Kidney (tissue), 22 donors: ENCODE measurements at regions of chrX and their contacts with region 1.

Region 1: GRCh38 chrX:18390941-18391538 is 34.4 kb upstream of the CDKL5 start:
- DNase-seq: peak in 4 of 5 donors; percentile 41 to 67 (median 48)
- H3K4me3 ChIP-seq: no peak overlapping the region
- H3K27ac ChIP-seq: no peak overlapping the region
- H3K4me1 ChIP-seq: no peaks in the 10 kb centered on the region
- H3K27me3 ChIP-seq: no peaks in the 10 kb centered on the region
- CTCF ChIP-seq: peak; percentile 58

Region 2: GRCh38 chrX:18769812-18770573 is 379.0 kb after region 1 on chrX:
- intact Hi-C with region 1: no loop called
- DNase-seq: peak in 2 of 5 donors; percentile 66 to 78
- H3K4me3 ChIP-seq: no peak overlapping the region
- H3K27ac ChIP-seq: no peak overlapping the region
- H3K4me1 ChIP-seq: no peaks in the 10 kb centered on the region
- H3K27me3 ChIP-seq: no peaks in the 10 kb centered on the region
- CTCF ChIP-seq: no peak

Region 3: DNA sequence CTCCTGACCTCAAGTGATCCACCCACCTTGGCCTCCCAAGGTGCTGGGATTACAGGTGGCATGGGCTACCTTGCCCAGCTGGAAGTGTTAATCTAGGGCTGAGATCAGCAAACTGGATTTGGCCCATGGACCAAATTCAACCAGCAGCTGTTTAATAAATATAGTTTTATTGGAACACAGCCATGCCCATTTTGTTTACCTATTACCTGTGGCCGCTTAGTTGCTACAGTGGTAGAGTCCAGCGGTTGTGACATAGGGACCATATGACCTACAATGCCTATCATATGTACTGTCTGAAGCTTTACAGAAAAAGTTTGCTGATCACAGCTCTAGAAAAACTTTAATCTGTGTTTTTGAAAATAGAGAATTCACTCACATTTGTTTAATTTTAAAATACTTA is 935.5 kb after region 1 on chrX:
- intact Hi-C with region 1: loop called (anchors 10 kb)
- DNase-seq: no peak
- H3K4me3 ChIP-seq: no peak overlapping the region
- H3K27ac ChIP-seq: no peak overlapping the region
- H3K4me1 ChIP-seq: no peaks in the 10 kb centered on the region
- H3K27me3 ChIP-seq: no peaks in the 10 kb centered on the region
- CTCF ChIP-seq: no peak